ENCODE measurements at regions of chr5 and their contacts with region 1.

Region 1: DNA sequence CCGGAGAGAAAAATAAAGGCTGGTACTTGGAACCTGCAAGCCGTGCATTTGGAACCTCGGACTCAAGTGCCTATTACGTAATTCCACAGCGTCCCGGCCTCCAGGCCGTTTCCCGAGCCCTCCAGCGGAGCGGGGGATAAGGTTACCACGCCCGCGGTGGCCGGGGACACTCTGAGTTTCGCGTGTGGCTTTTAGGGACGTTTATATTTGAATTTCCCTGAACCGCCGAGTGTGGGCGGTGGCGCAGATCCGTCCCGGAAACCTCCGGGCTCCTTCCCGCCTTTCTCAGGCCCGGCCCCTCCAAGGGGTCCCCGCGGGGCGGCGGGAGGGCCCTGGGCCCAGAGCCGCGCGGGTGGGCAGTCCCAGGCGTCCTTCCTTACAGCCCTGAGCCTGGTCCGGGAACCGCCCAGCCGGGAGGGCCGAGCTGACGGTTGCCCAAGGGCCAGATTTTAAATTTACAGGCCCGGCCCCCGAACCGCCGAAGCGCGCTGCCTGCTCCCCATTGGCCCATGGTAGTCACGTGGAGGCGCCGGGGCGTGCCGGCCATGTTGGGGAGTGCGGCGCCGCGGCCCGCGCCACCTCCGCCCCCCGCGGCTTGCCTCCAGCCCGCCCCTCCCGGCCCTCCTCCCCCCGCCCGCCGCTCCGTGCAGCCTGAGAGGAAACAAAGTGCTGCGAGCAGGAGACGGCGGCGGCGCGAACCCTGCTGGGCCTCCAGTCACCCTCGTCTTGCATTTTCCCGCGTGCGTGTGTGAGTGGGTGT is at the start of gene LMNB1:
- DNase-seq: peak; percentile 97
- H3K4me3 Mint-ChIP-seq: peak within 1 kb of the TSS; percentile 97
- H3K27ac Mint-ChIP-seq: peak within 1 kb of the TSS; percentile 99
- H3K4me1 Mint-ChIP-seq: peaks cover 14% of the 10 kb centered on the region
- H3K27me3 Mint-ChIP-seq: no peaks in the 10 kb centered on the region
- total RNA-seq, gene LMNB1: 212 to 215 TPM

Region 2: DNA sequence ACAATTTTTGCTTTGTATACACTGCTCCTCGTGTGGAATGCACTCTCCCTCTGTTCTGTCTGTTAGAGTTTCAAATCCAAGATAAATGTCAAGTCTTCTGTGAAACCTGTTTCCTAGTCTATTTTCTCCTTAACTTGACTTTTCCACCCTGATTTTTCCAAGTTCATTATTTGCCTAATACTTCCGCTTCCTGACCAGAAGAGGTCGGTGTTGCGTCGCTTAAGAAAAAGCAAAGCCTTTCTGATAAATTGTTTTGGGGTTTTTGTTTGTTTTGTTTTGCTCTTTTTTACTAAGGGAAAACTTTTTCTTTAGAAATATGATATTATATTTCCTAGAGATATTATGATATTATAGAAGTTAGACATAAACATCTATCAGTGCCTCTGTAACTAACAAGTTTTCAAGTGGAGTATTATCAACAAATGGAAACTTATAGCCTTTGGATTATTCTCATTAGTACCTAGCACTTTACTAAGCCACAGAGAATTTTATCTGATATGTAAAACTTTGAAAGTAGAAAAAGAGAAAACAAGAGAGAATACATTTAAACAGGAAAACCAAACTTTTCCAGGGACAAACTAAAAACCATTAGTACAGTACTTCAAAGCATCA is 120.2 kb before region 1 on chr5:
- CTCF ChIA-PET with region 1: interaction called, 28 read pairs
- POLR2A ChIA-PET with region 1: no interaction called
- intact Hi-C with region 1: no loop called
- DNase-seq: peak; percentile 30
- H3K4me3 Mint-ChIP-seq: no peak overlapping the region
- H3K27ac Mint-ChIP-seq: no peak overlapping the region
- H3K4me1 Mint-ChIP-seq: peaks cover 6% of the 10 kb centered on the region
- H3K27me3 Mint-ChIP-seq: no peaks in the 10 kb centered on the region

Region 3: GRCh38 chr5:126736141-126736540 is 40.5 kb before region 1 on chr5:
- CTCF ChIA-PET with region 1: interaction called, 13 read pairs
- POLR2A ChIA-PET with region 1: interaction called, 7 read pairs
- intact Hi-C with region 1: loop called (anchors 1 kb)
- DNase-seq: no peak
- H3K4me3 Mint-ChIP-seq: no peak overlapping the region
- H3K27ac Mint-ChIP-seq: no peak overlapping the region
- H3K4me1 Mint-ChIP-seq: peaks cover 4% of the 10 kb centered on the region
- H3K27me3 Mint-ChIP-seq: no peaks in the 10 kb centered on the region

Region 4: DNA sequence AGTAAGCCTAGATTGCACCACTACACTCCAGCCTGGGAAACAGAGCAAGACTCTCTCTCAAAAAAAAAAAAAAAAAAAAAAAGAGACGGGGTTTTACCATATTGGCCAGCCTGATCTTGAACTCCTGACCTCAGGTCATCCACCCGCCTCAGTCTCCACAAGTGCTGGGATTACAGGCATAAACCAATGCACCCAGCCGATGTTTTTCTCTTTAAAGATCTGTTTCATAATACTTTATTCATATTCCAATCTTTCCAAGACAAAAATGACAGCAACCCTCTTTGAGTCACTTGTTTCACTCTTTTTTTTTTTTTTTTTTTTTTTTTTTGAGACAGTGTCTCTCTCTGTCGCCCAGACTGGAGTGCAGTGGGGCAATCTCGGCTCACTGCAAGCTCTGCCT is 13.3 kb before region 1 on chr5:
- CTCF ChIA-PET with region 1: interaction called, 15 read pairs
- POLR2A ChIA-PET with region 1: interaction called, 30 read pairs
- intact Hi-C with region 1: loop called (anchors 1 kb)
- DNase-seq: peak; percentile 39
- H3K4me3 Mint-ChIP-seq: no peak overlapping the region
- H3K27ac Mint-ChIP-seq: peak overlapping the region; percentile 28
- H3K4me1 Mint-ChIP-seq: peaks cover 39% of the 10 kb centered on the region
- H3K27me3 Mint-ChIP-seq: no peaks in the 10 kb centered on the region

Region 5: GRCh38 chr5:126814721-126815404 is 38.2 kb after region 1 on chr5:
- CTCF ChIA-PET with region 1: interaction called, 58 read pairs
- POLR2A ChIA-PET with region 1: interaction called, 70 read pairs
- intact Hi-C with region 1: loop called (anchors 1 kb)
- DNase-seq: no peak
- H3K4me3 Mint-ChIP-seq: no peak overlapping the region
- H3K27ac Mint-ChIP-seq: peak overlapping the region; percentile 38
- H3K4me1 Mint-ChIP-seq: peaks cover 41% of the 10 kb centered on the region
- H3K27me3 Mint-ChIP-seq: no peaks in the 10 kb centered on the region

Region 6: GRCh38 chr5:128083033-128083810 is 1306.5 kb after region 1 on chr5 and contains the start of gene SLC12A2:
- CTCF ChIA-PET with region 1: no interaction called
- POLR2A ChIA-PET with region 1: no interaction called
- intact Hi-C with region 1: loop called (anchors 2 kb)
- DNase-seq: peak; percentile 92
- H3K4me3 Mint-ChIP-seq: peak within 1 kb of the TSS; percentile 89
- H3K27ac Mint-ChIP-seq: peak within 1 kb of the TSS; percentile 93
- H3K4me1 Mint-ChIP-seq: peaks cover 54% of the 10 kb centered on the region
- H3K27me3 Mint-ChIP-seq: no peaks in the 10 kb centered on the region
- total RNA-seq, gene SLC12A2: 9.7 to 9.9 TPM